Caco-2 (cell line): ENCODE measurements at regions of chr5 and their contacts with region 1.

Region 1: GRCh38 chr5:112848116-112848811 is 12.8 kb upstream of the SRP19 start:
- DNase-seq: peak in 1 of 2 experiments; percentile 57
- H3K4me3 ChIP-seq: no peak overlapping the region
- H3K4me3 Mint-ChIP-seq: no peak overlapping the region
- H3K27ac Mint-ChIP-seq: no peak overlapping the region
- H3K4me1 ChIP-seq: no peaks in the 10 kb centered on the region
- H3K4me1 Mint-ChIP-seq: no peaks in the 10 kb centered on the region
- H3K27me3 ChIP-seq: no peaks in the 10 kb centered on the region
- H3K27me3 Mint-ChIP-seq: no peaks in the 10 kb centered on the region
- CTCF ChIP-seq: peak; percentile 47 to 74

Region 2: GRCh38 chr5:112757468-112758208 is 90.6 kb before region 1 on chr5:
- CTCF ChIA-PET with region 1: interaction called, 3 read pairs
- POLR2A ChIA-PET with region 1: no interaction called
- intact Hi-C with region 1: loop called (anchors 5 kb)
- DNase-seq: peak in 1 of 2 experiments; percentile 43
- H3K4me3 ChIP-seq: no peak overlapping the region
- H3K4me3 Mint-ChIP-seq: no peak overlapping the region
- H3K27ac Mint-ChIP-seq: no peak overlapping the region
- H3K4me1 ChIP-seq: no peaks in the 10 kb centered on the region
- H3K4me1 Mint-ChIP-seq: no peaks in the 10 kb centered on the region
- H3K27me3 ChIP-seq: no peaks in the 10 kb centered on the region
- H3K27me3 Mint-ChIP-seq: no peaks in the 10 kb centered on the region
- CTCF ChIP-seq: peak; percentile 61 to 78

Region 3: DNA sequence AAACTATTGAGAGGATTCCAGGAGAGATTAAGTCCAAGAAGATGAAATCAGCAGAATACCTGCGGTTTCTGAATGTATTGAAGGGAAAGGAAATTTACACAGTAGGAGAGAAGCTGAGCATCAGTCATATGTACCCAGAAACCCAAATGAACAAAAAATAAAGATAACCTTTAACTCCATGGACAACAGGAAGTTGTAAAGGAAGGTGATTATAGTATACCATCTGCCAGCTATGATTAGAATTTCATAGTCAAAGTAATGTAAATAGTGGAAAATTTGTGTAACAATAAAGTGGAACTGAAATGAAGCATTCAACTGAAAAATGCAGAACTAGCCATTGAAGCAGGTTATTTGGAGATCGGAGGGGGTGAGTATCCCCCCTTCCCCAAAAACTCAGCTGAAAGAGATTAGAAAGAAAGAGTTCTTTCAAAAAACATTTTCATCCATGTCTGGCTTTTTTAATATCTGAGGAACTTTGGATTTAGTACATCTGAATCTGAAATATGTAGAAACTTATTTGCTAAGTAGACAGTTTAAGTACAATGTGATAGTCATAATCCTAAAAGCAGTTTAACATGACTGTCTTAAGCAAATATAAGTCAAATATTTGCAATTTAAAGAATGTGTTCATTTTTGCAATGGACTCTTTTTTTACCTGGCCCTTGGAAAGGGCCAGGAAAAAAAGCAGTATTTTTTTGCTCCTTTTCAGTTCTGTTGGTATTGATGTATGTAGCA is 52.2 kb before region 1 on chr5:
- CTCF ChIA-PET with region 1: interaction called, 4 read pairs
- POLR2A ChIA-PET with region 1: no interaction called
- intact Hi-C with region 1: loop called (anchors 2 kb)
- DNase-seq: peak in 1 of 2 experiments; percentile 3
- H3K4me3 ChIP-seq: no peak overlapping the region
- H3K4me3 Mint-ChIP-seq: peak overlapping the region; percentile 42
- H3K27ac Mint-ChIP-seq: peak overlapping the region; percentile 45
- H3K4me1 ChIP-seq: peaks cover 29% of the 10 kb centered on the region
- H3K4me1 Mint-ChIP-seq: peaks cover 34% of the 10 kb centered on the region
- H3K27me3 ChIP-seq: no peaks in the 10 kb centered on the region
- H3K27me3 Mint-ChIP-seq: no peaks in the 10 kb centered on the region
- CTCF ChIP-seq: no peak

Region 4: GRCh38 chr5:112878760-112879159 is 30.5 kb after region 1 on chr5:
- CTCF ChIA-PET with region 1: interaction called, 12 read pairs
- POLR2A ChIA-PET with region 1: no interaction called
- intact Hi-C with region 1: no loop called
- DNase-seq: peak in 1 of 2 experiments; percentile 7
- H3K4me3 ChIP-seq: no peak overlapping the region
- H3K4me3 Mint-ChIP-seq: no peak overlapping the region
- H3K27ac Mint-ChIP-seq: no peak overlapping the region
- H3K4me1 ChIP-seq: peaks cover 19% of the 10 kb centered on the region
- H3K4me1 Mint-ChIP-seq: peaks cover 12% of the 10 kb centered on the region
- H3K27me3 ChIP-seq: no peaks in the 10 kb centered on the region
- H3K27me3 Mint-ChIP-seq: no peaks in the 10 kb centered on the region
- CTCF ChIP-seq: no peak

Region 5: DNA sequence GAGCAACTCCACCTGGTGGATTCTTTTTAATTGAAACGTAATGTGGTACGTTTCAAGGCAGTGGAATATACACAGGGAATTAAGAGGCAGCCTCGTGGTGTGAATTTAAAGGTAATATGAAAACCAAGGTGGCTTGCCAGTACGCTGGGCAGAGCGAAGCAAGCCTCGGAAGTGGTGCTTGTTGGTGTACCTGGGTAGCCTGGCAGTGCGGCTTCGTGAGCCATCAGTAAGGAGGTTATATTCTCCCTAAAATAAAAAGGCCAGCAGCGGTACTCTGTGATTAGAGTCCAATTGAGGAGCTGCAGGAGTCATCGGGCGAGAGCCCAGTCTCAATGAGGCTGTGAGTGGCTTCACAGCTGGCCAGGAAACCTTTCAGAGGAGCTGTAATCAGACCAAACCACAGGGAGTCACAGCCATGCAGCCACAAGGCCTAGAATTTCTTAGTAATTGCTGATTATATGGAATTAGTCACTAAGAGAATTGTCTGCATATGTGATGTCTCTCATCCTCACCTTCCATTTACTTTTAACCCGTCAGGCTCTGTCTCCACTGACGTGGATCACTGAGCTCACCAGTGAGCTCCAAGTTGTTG is 186.0 kb after region 1 on chr5:
- CTCF ChIA-PET with region 1: no interaction called
- POLR2A ChIA-PET with region 1: no interaction called
- intact Hi-C with region 1: no loop called
- DNase-seq: no peak
- H3K4me3 ChIP-seq: no peak overlapping the region
- H3K4me3 Mint-ChIP-seq: no peak overlapping the region
- H3K27ac Mint-ChIP-seq: no peak overlapping the region
- H3K4me1 ChIP-seq: no peaks in the 10 kb centered on the region
- H3K4me1 Mint-ChIP-seq: peaks cover 7% of the 10 kb centered on the region
- H3K27me3 ChIP-seq: no peaks in the 10 kb centered on the region
- H3K27me3 Mint-ChIP-seq: no peaks in the 10 kb centered on the region
- CTCF ChIP-seq: no peak